Heart right ventricle (tissue), 16 donors: ENCODE measurements at regions of chr6 and their contacts with region 1.

Region 1: GRCh38 chr6:112237595-112237994 is 16.8 kb downstream of the LAMA4 start:
- DNase-seq: peak in 1 of 2 donors; percentile 77
- ATAC-seq: peak in 6 of 8 donors; percentile 25 to 80 (median 40)
- H3K4me3 ChIP-seq: no peak overlapping the region
- H3K27ac ChIP-seq: peak overlapping the region in 9 of 10 donors; percentile 56 to 89 (median 80)
- H3K4me1 ChIP-seq: peaks cover 8 to 97% (median 79%) of the 10 kb centered on the region in 9 donors
- H3K27me3 ChIP-seq: no peaks in the 10 kb centered on the region
- CTCF ChIP-seq: no peak

Region 2: GRCh38 chr6:112269114-112269513 is 31.5 kb after region 1 on chr6:
- intact Hi-C with region 1: loop called in 1 of 10 experiments (anchors 2 kb)
- DNase-seq: peak in 1 of 2 donors; percentile 28
- ATAC-seq: peak; percentile 30 to 84 (median 72)
- H3K4me3 ChIP-seq: no peak overlapping the region
- H3K27ac ChIP-seq: peak overlapping the region in 9 of 10 donors; percentile 63 to 85 (median 69)
- H3K4me1 ChIP-seq: peaks cover 3 to 39% (median 22%) of the 10 kb centered on the region in 9 donors
- H3K27me3 ChIP-seq: no peaks in the 10 kb centered on the region
- CTCF ChIP-seq: peak in 7 of 9 donors; percentile 18 to 63 (median 43)

Region 3: DNA sequence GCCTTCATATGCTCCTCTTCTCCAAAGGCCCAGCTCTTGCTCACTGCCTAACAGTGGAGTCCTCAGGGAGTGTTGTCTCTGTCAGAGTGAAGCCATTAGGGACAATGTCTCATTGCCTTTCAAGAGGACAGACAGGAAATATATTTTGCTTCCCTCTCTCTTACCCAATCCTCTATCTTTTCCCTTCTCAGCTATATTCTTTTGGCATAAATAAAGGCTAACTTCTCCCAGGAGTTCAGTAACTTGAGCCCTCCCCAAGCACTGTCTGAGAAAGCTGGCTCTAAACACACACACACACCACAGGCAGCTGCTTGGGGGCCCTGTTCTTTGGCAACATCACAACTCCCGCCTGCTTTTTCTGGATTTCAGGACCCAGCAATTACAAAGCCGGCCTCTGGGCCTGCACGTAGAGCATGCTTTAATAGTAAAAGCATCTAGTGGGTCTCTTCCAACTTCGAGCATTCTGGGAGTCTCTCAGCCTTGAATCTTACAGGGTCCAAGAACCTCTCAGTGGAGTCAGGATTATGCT is 51.5 kb after region 1 on chr6:
- intact Hi-C with region 1: loop called in 1 of 10 experiments (anchors 5 kb)
- DNase-seq: peak; percentile 61 to 83
- ATAC-seq: peak; percentile 89 to 94 (median 92)
- H3K4me3 ChIP-seq: no peak overlapping the region
- H3K27ac ChIP-seq: peak overlapping the region in 9 of 10 donors; percentile 9 to 68 (median 55)
- H3K4me1 ChIP-seq: peaks cover 0 to 44% (median 19%) of the 10 kb centered on the region in 9 donors
- H3K27me3 ChIP-seq: no peaks in the 10 kb centered on the region
- CTCF ChIP-seq: no peak